Activated CD4-positive, alpha-beta T cell treated with anti-CD3 and anti-CD28 coated beads for 36 hours (primary cell): ENCODE measurements at regions of chrX and their contacts with region 1.

Region 1: GRCh38 chrX:38500866-38501265 is 60.5 kb upstream of the TSPAN7 start:
- DNase-seq: no peak
- ATAC-seq: no peak
- H3K4me3 Mint-ChIP-seq: no peak overlapping the region
- H3K27ac Mint-ChIP-seq: no peak overlapping the region
- H3K4me1 Mint-ChIP-seq: no peaks in the 10 kb centered on the region
- H3K27me3 Mint-ChIP-seq: peaks cover 2% of the 10 kb centered on the region

Region 2: GRCh38 chrX:38479827-38480226 is 21.0 kb before region 1 on chrX:
- CTCF ChIA-PET with region 1: no interaction called
- POLR2A ChIA-PET with region 1: no interaction called
- intact Hi-C with region 1: loop called in 1 of 2 experiments (anchors 2 kb)
- DNase-seq: no peak
- ATAC-seq: no peak
- H3K4me3 Mint-ChIP-seq: no peak overlapping the region
- H3K27ac Mint-ChIP-seq: no peak overlapping the region
- H3K4me1 Mint-ChIP-seq: no peaks in the 10 kb centered on the region
- H3K27me3 Mint-ChIP-seq: no peaks in the 10 kb centered on the region